Posterior cingulate gyrus (tissue), 11 donors: ENCODE measurements at regions of chr1 and their contacts with region 1.

Region 1: DNA sequence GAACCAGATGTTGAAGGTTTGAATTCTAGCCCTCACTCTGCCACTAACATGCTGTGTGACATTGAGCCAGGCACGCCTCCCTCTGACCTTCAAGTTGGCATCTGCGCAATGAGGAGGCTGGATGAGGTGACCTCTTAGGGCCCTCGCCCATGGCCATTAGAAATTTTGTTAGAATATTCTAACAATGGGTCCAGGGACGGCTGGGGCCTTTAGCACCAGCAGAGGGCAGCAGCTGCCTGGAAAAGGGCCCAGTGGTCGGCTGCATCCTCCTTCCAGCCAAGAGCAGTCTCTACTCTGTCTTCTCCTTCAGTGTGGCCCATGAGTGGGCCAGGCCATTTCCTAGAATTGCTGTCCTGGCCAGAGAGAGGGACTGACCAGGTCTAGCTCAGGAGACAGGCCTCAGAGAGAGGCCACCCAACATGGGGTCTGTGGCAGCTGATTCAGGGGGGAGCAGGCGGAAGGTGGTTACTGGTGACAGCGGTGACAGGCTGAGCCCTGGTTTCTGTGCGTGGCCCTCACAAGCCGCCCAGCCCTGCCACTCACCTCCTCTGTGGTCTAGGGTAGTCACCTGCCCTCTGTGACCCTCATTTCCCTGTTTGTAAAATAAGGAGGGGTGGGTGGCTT is 101.3 kb upstream of the ACTL8 start:
- DNase-seq: peak; percentile 44 to 95 (median 68)

Region 2: GRCh38 chr1:17922833-17923232 is 269.0 kb after region 1 on chr1:
- intact Hi-C with region 1: loop called (anchors 10 kb)
- DNase-seq: peak; percentile 27 to 95 (median 64)

Region 3: GRCh38 chr1:18575620-18576019 is 921.8 kb after region 1 on chr1:
- intact Hi-C with region 1: loop called (anchors 5 kb)
- DNase-seq: peak in 7 of 10 donors; percentile 50 to 90 (median 70)